MCF 10A (cell line): ENCODE measurements at regions of chr6 and their contacts with region 1.

Region 1: GRCh38 chr6:109440331-109441068 is at the starts of genes PPIL6 and SMPD2:
- DNase-seq: peak; percentile 82
- H3K4me3 Mint-ChIP-seq: peak within 1 kb of the TSS; percentile 89
- H3K27ac Mint-ChIP-seq: peak within 1 kb of the TSS; percentile 96
- H3K4me1 Mint-ChIP-seq: peaks cover 8% of the 10 kb centered on the region
- H3K27me3 Mint-ChIP-seq: no peaks in the 10 kb centered on the region
- CTCF ChIP-seq: no peak
- total RNA-seq, gene PPIL6: 3.9 and 6.5 TPM in 2 replicates
- total RNA-seq, gene SMPD2: 17.7 and 19.9 TPM in 2 replicates

Region 2: DNA sequence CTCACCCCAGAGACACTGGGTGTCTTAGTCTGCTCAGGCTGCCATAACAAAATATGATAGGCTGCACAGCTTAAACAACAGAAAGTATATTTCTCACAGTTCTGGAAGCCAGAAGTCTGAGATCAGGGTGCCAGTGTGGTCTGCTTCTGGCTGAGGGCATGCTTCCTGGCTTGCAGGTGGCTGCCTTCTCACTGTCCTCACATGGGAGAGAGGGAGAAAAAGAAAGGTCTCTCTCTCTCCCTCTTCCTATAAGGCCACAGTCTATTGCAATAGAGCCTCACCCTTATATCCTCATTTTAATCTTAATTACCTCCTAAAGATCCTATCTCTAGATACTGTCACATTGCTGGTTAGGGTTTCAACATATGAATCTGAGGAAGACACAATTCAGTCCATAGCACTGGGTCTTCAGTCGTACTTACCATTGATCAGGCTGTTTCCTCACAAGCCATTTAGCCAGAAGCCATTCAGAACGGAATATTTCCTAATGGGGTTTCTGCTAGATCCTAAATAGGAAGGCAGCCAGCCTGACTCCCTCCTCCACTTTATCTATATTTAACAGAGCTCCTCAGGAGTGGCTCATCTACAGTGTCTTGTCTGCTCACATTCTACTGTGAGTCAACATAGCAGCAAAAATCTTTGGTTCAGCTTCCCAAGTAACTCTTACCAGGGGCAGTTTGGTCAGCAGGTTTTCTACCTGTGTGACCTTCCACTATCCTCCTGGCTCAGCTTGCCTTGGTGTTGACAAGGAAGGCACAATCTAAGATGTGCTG is 100.4 kb before region 1 on chr6:
- CTCF ChIA-PET with region 1: no interaction called
- POLR2A ChIA-PET with region 1: no interaction called
- intact Hi-C with region 1: no loop called
- DNase-seq: no peak
- H3K4me3 Mint-ChIP-seq: no peak overlapping the region
- H3K27ac Mint-ChIP-seq: no peak overlapping the region
- H3K4me1 Mint-ChIP-seq: peaks cover 8% of the 10 kb centered on the region
- H3K27me3 Mint-ChIP-seq: no peaks in the 10 kb centered on the region
- CTCF ChIP-seq: no peak

Region 3: GRCh38 chr6:109455502-109456282 is 15.2 kb after region 1 on chr6 and contains the start of gene MICAL1:
- CTCF ChIA-PET with region 1: interaction called, 5 read pairs
- POLR2A ChIA-PET with region 1: interaction called, 20 read pairs
- intact Hi-C with region 1: no loop called
- DNase-seq: peak; percentile 32
- H3K4me3 Mint-ChIP-seq: peak within 1 kb of the TSS; percentile 93
- H3K27ac Mint-ChIP-seq: peak within 1 kb of the TSS; percentile 63
- H3K4me1 Mint-ChIP-seq: peaks cover 12% of the 10 kb centered on the region
- H3K27me3 Mint-ChIP-seq: no peaks in the 10 kb centered on the region
- CTCF ChIP-seq: no peak
- total RNA-seq, gene MICAL1: 23.2 and 35.3 TPM in 2 replicates

Region 4: DNA sequence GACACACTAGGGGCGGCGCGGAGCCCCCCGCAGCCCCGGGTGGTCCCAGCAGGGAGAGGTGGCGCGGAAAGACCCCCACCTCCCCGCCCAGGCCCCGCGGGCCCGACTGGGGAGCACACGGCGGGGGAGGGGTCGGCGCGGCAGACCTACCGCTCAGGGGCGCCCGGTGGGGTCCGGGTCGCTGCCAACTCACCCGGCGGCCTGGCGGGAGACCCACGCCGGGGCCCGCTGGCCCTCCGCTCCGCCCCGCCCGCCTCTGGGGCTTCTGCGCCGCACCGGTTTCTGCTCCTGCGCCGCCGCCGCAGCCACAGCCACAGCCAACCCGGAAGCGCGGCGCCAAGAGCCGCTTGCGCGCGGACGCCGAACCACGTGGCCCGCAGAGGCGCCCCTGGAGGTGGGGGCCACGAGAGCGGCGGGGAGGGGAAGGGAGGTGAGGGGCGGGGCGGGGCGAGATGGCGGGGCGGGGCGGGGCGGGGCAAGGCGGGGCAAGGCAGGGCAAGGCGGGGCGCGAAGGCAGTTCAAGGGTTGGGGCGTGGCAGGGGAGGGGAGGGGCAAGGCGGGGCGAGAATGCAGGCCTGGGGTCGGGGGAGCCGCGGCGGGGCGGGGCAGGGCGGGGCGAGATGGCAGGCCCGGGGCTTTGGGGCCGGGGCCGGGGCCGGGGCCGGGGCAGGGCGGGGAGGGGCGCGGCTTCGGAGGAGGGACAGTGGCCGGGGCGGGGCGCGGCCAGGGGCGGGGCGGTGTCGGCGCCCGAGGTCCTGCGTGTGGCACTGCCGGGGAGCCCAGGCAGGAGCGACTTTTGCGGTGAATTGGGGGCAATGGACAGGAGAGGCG is 42.6 kb after region 1 on chr6 and contains the start of gene ZBTB24:
- CTCF ChIA-PET with region 1: no interaction called
- POLR2A ChIA-PET with region 1: interaction called, 13 read pairs
- intact Hi-C with region 1: loop called (anchors 2 kb)
- DNase-seq: peak; percentile 88
- H3K4me3 Mint-ChIP-seq: peak within 1 kb of the TSS; percentile 89
- H3K27ac Mint-ChIP-seq: peak within 1 kb of the TSS; percentile 37
- H3K4me1 Mint-ChIP-seq: peaks cover 25% of the 10 kb centered on the region
- H3K27me3 Mint-ChIP-seq: no peaks in the 10 kb centered on the region
- CTCF ChIP-seq: no peak
- total RNA-seq, gene ZBTB24: 9.6 and 10.4 TPM in 2 replicates